ENCODE measurements at regions of chr16 and their contacts with region 1.

Region 1: GRCh38 chr16:31179747-31180459 is at the start of gene FUS:
- DNase-seq: peak; percentile 96 to 98
- ATAC-seq: peak; percentile 73 to 88 (median 74)
- H3K4me3 ChIP-seq: peak within 1 kb of the TSS; percentile 89
- H3K4me3 Mint-ChIP-seq: peak within 1 kb of the TSS; percentile 99
- H3K27ac ChIP-seq: peak within 1 kb of the TSS; percentile 92
- H3K27ac Mint-ChIP-seq: peak within 1 kb of the TSS; percentile 99
- H3K4me1 ChIP-seq: peaks cover 71% of the 10 kb centered on the region
- H3K4me1 Mint-ChIP-seq: peaks cover 64 to 69% of the 10 kb centered on the region in 2 donors
- H3K27me3 ChIP-seq: no peaks in the 10 kb centered on the region
- H3K27me3 Mint-ChIP-seq: peaks cover 0 to 2% of the 10 kb centered on the region in 2 donors
- CTCF ChIP-seq: no peak
- total RNA-seq, gene FUS: 872 to 934 (median 918) TPM

Region 2: GRCh38 chr16:31052124-31052523 is 127.8 kb before region 1 on chr16:
- intact Hi-C with region 1: no loop called
- DNase-seq: no peak
- ATAC-seq: no peak
- H3K4me3 ChIP-seq: no peak overlapping the region
- H3K4me3 Mint-ChIP-seq: no peak overlapping the region
- H3K27ac ChIP-seq: no peak overlapping the region
- H3K27ac Mint-ChIP-seq: no peak overlapping the region
- H3K4me1 ChIP-seq: no peaks in the 10 kb centered on the region
- H3K4me1 Mint-ChIP-seq: peaks cover 0 to 9% of the 10 kb centered on the region in 2 donors
- H3K27me3 ChIP-seq: no peaks in the 10 kb centered on the region
- H3K27me3 Mint-ChIP-seq: no peaks in the 10 kb centered on the region
- CTCF ChIP-seq: no peak

Region 3: DNA sequence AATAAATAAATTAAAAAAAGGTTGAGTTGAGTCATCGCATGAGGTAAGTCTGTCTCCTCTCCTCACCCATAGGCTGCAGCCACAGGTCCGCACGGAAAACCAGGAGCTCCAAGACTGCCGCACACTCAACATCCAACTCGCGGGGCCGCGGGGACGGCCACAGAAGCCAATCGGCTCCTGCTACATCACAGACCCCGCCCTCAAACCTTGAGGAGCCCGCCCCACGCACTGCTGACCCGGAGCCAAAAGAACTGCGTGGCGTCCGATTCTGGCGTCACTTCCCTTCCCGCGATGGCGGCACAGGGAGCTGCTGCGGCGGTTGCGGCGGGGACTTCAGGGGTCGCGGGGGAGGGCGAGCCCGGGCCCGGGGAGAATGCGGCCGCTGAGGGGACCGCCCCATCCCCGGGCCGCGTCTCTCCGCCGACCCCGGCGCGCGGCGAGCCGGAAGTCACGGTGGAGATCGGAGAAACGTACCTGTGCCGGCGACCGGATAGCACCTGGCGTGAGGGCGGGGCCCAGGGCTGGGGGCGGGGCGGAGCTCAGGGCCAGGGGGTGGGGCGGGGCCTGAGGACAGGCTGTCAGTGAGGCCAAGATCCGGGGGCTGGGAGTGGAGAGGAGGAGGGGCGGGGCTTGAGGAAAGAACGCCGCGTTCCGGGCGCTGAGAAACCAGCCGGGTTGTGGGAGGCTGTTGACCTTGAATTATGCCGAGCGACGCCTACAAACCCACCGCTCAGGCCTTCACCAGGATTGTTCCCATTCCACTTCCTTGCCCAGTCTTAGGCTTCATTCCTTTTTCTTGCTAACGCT is 62.3 kb before region 1 on chr16 and contains the start of gene KAT8:
- intact Hi-C with region 1: loop called (anchors 10 kb)
- DNase-seq: peak; percentile 93 to 98
- ATAC-seq: peak; percentile 92 to 97 (median 92)
- H3K4me3 ChIP-seq: peak within 1 kb of the TSS; percentile 39
- H3K4me3 Mint-ChIP-seq: peak within 1 kb of the TSS; percentile 85
- H3K27ac ChIP-seq: peak within 1 kb of the TSS; percentile 74
- H3K27ac Mint-ChIP-seq: peak within 1 kb of the TSS; percentile 81 to 91
- H3K4me1 ChIP-seq: peaks cover 27% of the 10 kb centered on the region
- H3K4me1 Mint-ChIP-seq: peaks cover 12 to 17% of the 10 kb centered on the region in 2 donors
- H3K27me3 ChIP-seq: no peaks in the 10 kb centered on the region
- H3K27me3 Mint-ChIP-seq: no peaks in the 10 kb centered on the region
- CTCF ChIP-seq: no peak
- total RNA-seq, gene KAT8: 90.6 to 101 (median 93.4) TPM

Region 4: GRCh38 chr16:31142109-31143010 is 37.5 kb before region 1 on chr16:
- intact Hi-C with region 1: loop called (anchors 1 kb)
- DNase-seq: peak; percentile 86 to 98
- ATAC-seq: peak; percentile 86 to 97 (median 88)
- H3K4me3 ChIP-seq: peak overlapping the region; percentile 6
- H3K4me3 Mint-ChIP-seq: peak overlapping the region; percentile 75
- H3K27ac ChIP-seq: peak overlapping the region; percentile 62
- H3K27ac Mint-ChIP-seq: peak overlapping the region; percentile 76 to 82
- H3K4me1 ChIP-seq: peaks cover 19% of the 10 kb centered on the region
- H3K4me1 Mint-ChIP-seq: peaks cover 15 to 22% of the 10 kb centered on the region in 2 donors
- H3K27me3 ChIP-seq: no peaks in the 10 kb centered on the region
- H3K27me3 Mint-ChIP-seq: no peaks in the 10 kb centered on the region
- CTCF ChIP-seq: peak; percentile 87

Region 5: DNA sequence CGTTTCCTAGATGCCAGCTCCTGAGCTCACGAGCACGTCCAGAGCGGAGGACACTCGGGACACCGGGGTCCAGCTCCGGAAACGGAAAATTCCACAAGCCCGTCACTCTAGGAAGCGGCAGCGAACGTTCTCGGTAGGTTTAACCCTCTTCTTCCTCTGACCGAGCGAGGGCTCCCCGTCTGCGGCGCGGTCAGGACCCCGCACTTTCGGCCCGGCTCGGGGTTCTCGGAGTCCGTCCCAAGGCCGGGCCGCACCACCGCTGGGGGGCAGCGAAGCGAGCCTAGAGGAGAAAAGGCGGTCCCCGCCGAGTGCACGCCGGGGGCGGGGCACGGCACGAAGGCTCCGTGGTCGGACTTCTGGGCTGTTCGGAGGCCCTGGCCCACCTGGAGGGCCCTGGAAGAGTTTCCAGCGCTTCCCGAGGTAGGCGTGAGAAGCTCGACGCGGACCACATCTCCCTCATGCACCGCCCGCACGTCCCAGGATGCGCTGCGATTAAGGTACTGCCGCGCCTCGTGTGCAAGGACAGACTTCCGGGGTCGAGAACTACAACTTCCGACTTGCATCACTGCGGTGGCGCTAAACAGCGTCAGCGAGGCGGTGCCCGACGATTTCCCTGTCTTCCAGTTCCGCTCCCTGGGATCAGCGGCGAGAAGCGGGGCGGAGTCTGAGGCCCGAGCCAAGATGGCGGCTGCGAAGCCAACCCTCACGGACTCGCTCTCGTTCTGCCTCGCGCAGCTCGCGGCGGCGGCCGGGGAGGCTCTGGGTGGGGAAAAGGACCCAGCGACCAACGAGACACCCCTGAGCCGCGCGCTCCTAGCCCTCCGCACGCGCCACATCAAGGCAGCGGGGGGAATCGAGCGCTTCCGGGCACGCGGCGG is 279.2 kb after region 1 on chr16 and contains the start of gene ARMC5:
- intact Hi-C with region 1: loop called (anchors 1 kb)
- DNase-seq: peak; percentile 92 to 99
- ATAC-seq: peak; percentile 68 to 84 (median 70)
- H3K4me3 ChIP-seq: peak within 1 kb of the TSS; percentile 85
- H3K4me3 Mint-ChIP-seq: peak within 1 kb of the TSS; percentile 94
- H3K27ac ChIP-seq: peak within 1 kb of the TSS; percentile 97
- H3K27ac Mint-ChIP-seq: peak within 1 kb of the TSS; percentile 94 to 97
- H3K4me1 ChIP-seq: peaks cover 60% of the 10 kb centered on the region
- H3K4me1 Mint-ChIP-seq: peaks cover 26 to 37% of the 10 kb centered on the region in 2 donors
- H3K27me3 ChIP-seq: no peaks in the 10 kb centered on the region
- H3K27me3 Mint-ChIP-seq: no peaks in the 10 kb centered on the region
- CTCF ChIP-seq: peak; percentile 58
- total RNA-seq, gene ARMC5: 10.4 to 22.8 (median 16.6) TPM